Naive thymus-derived CD4-positive, alpha-beta T cell (primary cell): ENCODE measurements at regions of chr1 and their contacts with region 1.

Region 1: DNA sequence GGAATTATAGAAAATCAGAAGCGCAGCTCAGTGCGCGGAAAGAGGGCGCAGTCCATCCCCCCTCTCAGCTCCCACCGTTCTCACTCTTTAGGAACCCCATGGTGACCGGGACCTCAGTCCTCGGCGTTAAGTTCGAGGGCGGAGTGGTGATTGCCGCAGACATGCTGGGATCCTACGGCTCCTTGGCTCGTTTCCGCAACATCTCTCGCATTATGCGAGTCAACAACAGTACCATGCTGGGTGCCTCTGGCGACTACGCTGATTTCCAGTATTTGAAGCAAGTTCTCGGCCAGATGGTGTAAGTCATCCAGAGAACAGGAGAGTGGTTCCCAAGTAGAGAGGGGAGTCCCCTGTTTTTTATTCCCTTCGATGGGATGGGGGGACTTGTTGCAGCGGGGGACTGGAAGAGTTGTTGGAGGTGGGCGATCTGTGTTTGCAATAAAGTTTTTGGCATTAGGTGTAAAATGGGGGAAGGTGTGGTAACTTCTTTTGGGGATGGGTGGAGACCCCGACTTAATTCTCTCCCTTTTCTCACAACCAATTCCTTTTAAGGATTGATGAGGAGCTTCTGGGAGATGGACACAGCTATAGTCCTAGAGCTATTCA is 620 bp downstream of the PSMB4 start:
- DNase-seq: peak in 3 of 9 donors; percentile 2 to 10 (median 10)
- ATAC-seq: peak; percentile 15
- H3K4me3 ChIP-seq: peak overlapping the region; percentile 95
- H3K4me3 Mint-ChIP-seq: peak overlapping the region; percentile 84 to 99 (median 94)
- H3K27ac ChIP-seq: peak overlapping the region; percentile 98
- H3K27ac Mint-ChIP-seq: peak overlapping the region; percentile 94 to 99 (median 98)
- H3K4me1 ChIP-seq: peaks cover 13 to 14% of the 10 kb centered on the region in 2 donors
- H3K4me1 Mint-ChIP-seq: peaks cover 11 to 34% (median 28%) of the 10 kb centered on the region in 7 donors
- H3K27me3 ChIP-seq: no peaks in the 10 kb centered on the region
- H3K27me3 Mint-ChIP-seq: peaks cover 0 to 12% (median 0%) of the 10 kb centered on the region in 5 donors

Region 2: GRCh38 chr1:150650199-150650598 is 749.8 kb before region 1 on chr1:
- CTCF ChIA-PET with region 1: no interaction called
- POLR2A ChIA-PET with region 1: no interaction called
- intact Hi-C with region 1: no loop called
- DNase-seq: no peak
- ATAC-seq: no peak
- H3K4me3 ChIP-seq: no peak overlapping the region
- H3K4me3 Mint-ChIP-seq: no peak overlapping the region
- H3K27ac ChIP-seq: no peak overlapping the region
- H3K27ac Mint-ChIP-seq: no peak overlapping the region
- H3K4me1 ChIP-seq: no peaks in the 10 kb centered on the region
- H3K4me1 Mint-ChIP-seq: peaks cover 0 to 10% (median 2%) of the 10 kb centered on the region in 7 donors
- H3K27me3 ChIP-seq: no peaks in the 10 kb centered on the region
- H3K27me3 Mint-ChIP-seq: no peaks in the 10 kb centered on the region

Region 3: DNA sequence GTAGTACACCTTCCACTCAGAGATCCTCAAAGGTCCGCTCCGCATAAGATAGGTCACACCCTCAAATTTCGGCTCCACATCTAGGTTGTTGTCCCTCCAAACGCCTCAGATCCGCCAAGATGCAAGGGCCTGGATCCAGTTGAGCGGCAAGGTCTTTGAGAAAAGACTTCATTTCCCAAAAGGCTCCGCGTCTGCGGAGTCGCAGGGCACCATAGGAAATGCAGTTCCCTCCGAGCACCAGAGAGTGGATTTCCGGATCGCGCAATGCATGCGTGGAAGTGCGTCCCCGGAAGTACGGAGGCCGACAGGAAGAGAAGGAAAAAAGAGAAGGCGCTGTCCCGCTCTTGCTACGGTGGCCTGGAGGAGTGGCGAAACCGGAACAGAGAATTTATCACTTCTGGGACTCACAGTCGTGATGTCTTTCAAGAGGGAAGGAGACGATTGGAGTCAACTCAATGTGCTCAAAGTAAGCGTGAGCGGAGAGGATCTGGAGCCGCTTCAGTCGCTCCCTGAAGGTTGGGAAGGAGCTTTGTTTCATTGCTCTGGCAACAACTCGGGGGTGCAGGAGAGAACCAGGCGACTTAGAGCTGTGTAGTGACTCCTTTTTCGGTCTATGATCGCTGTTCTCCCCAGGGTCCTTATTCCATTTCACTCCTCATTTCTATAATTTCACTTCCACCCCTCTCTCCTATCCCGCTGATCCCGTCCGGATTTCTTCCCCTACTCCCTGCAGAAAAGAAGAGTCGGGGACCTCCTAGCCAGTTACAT is 234.1 kb before region 1 on chr1 and contains the starts of genes LYSMD1 and SCNM1:
- CTCF ChIA-PET with region 1: no interaction called
- POLR2A ChIA-PET with region 1: interaction called, 3 read pairs
- intact Hi-C with region 1: loop called in 1 of 2 experiments (anchors 1 kb)
- DNase-seq: peak; percentile 78 to 98 (median 97)
- ATAC-seq: peak; percentile 98
- H3K4me3 ChIP-seq: peak within 1 kb of the TSS; percentile 97
- H3K4me3 Mint-ChIP-seq: peak within 1 kb of the TSS; percentile 87 to 99 (median 95)
- H3K27ac ChIP-seq: peak within 1 kb of the TSS; percentile 71
- H3K27ac Mint-ChIP-seq: peak within 1 kb of the TSS; percentile 90 to 99 (median 97)
- H3K4me1 ChIP-seq: peaks cover 18 to 19% of the 10 kb centered on the region in 2 donors
- H3K4me1 Mint-ChIP-seq: peaks cover 30 to 70% (median 52%) of the 10 kb centered on the region in 7 donors
- H3K27me3 ChIP-seq: no peaks in the 10 kb centered on the region
- H3K27me3 Mint-ChIP-seq: peaks cover 0 to 3% (median 0%) of the 10 kb centered on the region in 5 donors
- total RNA-seq, gene LYSMD1: 1.4 to 3.3 (median 2.3) TPM
- total RNA-seq, gene SCNM1: 37.1 to 73.1 (median 57.1) TPM

Region 4: GRCh38 chr1:151198255-151199127 is 201.5 kb before region 1 on chr1 and contains the start of gene PIP5K1A:
- CTCF ChIA-PET with region 1: no interaction called
- POLR2A ChIA-PET with region 1: no interaction called
- intact Hi-C with region 1: loop called (anchors 1 to 2 kb)
- DNase-seq: peak; percentile 96 to 99 (median 97)
- ATAC-seq: peak; percentile 98
- H3K4me3 ChIP-seq: peak within 1 kb of the TSS; percentile 83
- H3K4me3 Mint-ChIP-seq: peak within 1 kb of the TSS; percentile 93 to 100 (median 98)
- H3K27ac ChIP-seq: peak within 1 kb of the TSS; percentile 88
- H3K27ac Mint-ChIP-seq: peak within 1 kb of the TSS; percentile 95 to 99 (median 98)
- H3K4me1 ChIP-seq: peaks cover 11% of the 10 kb centered on the region in 2 donors
- H3K4me1 Mint-ChIP-seq: peaks cover 31 to 56% (median 46%) of the 10 kb centered on the region in 7 donors
- H3K27me3 ChIP-seq: no peaks in the 10 kb centered on the region
- H3K27me3 Mint-ChIP-seq: peaks cover 0 to 12% (median 0%) of the 10 kb centered on the region in 5 donors
- total RNA-seq, gene PIP5K1A: 56.9 to 76.5 (median 59.5) TPM

Region 5: GRCh38 chr1:151311589-151312331 is 88.2 kb before region 1 on chr1:
- CTCF ChIA-PET with region 1: no interaction called
- POLR2A ChIA-PET with region 1: no interaction called
- intact Hi-C with region 1: no loop called
- DNase-seq: peak in 1 of 9 donors; percentile 65
- ATAC-seq: peak; percentile 94
- H3K4me3 ChIP-seq: no peak overlapping the region
- H3K4me3 Mint-ChIP-seq: peak overlapping the region in 2 of 10 donors; percentile 7 to 12
- H3K27ac ChIP-seq: peak overlapping the region; percentile 4
- H3K27ac Mint-ChIP-seq: peak overlapping the region; percentile 21 to 88 (median 63)
- H3K4me1 ChIP-seq: peaks cover 4 to 10% of the 10 kb centered on the region in 2 donors
- H3K4me1 Mint-ChIP-seq: peaks cover 30 to 58% (median 48%) of the 10 kb centered on the region in 7 donors
- H3K27me3 ChIP-seq: no peaks in the 10 kb centered on the region
- H3K27me3 Mint-ChIP-seq: no peaks in the 10 kb centered on the region

Region 6: DNA sequence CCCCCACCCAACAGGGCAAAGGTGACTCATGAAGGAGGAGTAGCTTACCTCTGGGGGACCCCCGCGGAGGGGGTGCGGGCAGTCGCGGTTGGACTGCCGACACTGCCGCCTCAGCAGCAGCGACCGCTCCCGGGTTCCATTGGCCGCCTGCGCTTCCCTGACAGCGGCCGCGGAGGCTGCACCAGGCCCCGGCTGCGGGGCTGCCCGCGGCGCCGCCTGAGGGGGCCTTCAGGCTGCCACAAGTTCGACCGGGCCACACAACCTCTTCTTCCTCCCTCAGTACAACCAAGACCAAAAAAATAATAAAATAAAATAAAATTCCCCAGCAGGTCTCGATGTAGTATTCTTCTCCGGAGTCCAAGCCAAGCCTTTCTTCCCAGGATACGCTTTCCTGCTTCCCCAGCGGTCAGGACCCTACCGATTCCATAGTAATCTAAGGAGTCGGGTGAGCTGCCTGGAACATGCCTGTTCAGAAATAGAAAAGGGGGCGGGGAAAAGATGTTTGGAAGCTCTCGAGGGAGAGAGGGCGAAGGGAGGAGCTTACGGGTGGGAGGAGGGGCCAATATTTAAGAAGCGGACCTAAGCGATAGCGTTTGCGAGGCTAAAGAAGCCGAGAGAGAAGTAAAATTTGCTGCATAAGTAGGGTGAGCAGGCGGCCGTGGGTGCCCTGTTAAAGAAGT is 72.6 kb before region 1 on chr1 and contains the start of gene PI4KB:
- CTCF ChIA-PET with region 1: no interaction called
- POLR2A ChIA-PET with region 1: interaction called, 11 read pairs
- intact Hi-C with region 1: loop called (anchors 1 kb)
- DNase-seq: peak; percentile 72 to 96 (median 93)
- ATAC-seq: peak; percentile 96
- H3K4me3 ChIP-seq: peak within 1 kb of the TSS; percentile 72
- H3K4me3 Mint-ChIP-seq: peak within 1 kb of the TSS; percentile 91 to 100 (median 96)
- H3K27ac ChIP-seq: peak within 1 kb of the TSS; percentile 96
- H3K27ac Mint-ChIP-seq: peak within 1 kb of the TSS; percentile 90 to 100 (median 97)
- H3K4me1 ChIP-seq: peaks cover 6 to 18% of the 10 kb centered on the region in 2 donors
- H3K4me1 Mint-ChIP-seq: peaks cover 14 to 53% (median 44%) of the 10 kb centered on the region in 7 donors
- H3K27me3 ChIP-seq: no peaks in the 10 kb centered on the region
- H3K27me3 Mint-ChIP-seq: peaks cover 0 to 2% (median 0%) of the 10 kb centered on the region in 5 donors
- total RNA-seq, gene PI4KB: 64.0 to 91.9 (median 76.3) TPM

Region 7: DNA sequence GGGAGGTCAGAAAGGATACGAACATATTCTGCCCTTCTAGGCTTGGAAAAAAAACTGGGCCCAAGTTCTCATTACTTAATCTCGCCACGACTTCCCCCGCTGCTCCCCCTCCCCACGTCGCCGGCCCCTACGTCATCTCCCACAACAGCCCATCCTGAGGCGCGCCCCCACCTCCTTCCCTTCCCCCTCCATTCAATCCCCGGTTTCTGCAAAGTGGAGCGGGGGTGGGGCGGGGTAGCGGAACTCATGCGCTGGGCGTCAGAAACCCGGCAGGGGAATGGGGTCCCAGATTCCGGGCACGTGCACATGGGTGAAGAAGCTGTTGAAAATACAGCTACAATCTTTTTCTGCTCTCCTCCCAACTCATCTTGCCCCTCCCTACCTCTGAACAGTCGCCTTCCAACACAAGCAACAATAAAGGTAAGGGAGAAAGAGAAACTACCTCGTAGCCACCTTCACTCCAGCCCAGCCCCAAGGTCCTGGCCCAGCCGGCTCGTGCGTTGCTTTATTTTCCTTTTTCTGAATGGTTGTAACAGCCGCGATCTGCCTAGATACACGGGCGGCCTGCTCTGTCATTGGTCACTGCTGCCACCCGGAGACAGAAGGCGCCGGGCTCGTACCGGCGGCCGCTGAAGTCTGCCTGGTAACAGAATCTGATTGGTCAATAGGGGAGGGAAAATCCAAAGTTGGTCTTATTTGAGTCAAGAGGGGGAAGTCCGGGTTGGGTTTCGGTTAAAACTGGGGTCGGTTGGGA is 53.0 kb before region 1 on chr1 and contains the start of gene RFX5:
- CTCF ChIA-PET with region 1: no interaction called
- POLR2A ChIA-PET with region 1: interaction called, 3 read pairs
- intact Hi-C with region 1: loop called (anchors 1 kb)
- DNase-seq: peak; percentile 73 to 98 (median 94)
- ATAC-seq: peak; percentile 95
- H3K4me3 ChIP-seq: peak within 1 kb of the TSS; percentile 75
- H3K4me3 Mint-ChIP-seq: peak within 1 kb of the TSS; percentile 85 to 98 (median 95)
- H3K27ac ChIP-seq: peak within 1 kb of the TSS; percentile 96
- H3K27ac Mint-ChIP-seq: peak within 1 kb of the TSS; percentile 95 to 100 (median 99)
- H3K4me1 ChIP-seq: peaks cover 13 to 16% of the 10 kb centered on the region in 2 donors
- H3K4me1 Mint-ChIP-seq: peaks cover 20 to 44% (median 39%) of the 10 kb centered on the region in 7 donors
- H3K27me3 ChIP-seq: no peaks in the 10 kb centered on the region
- H3K27me3 Mint-ChIP-seq: no peaks in the 10 kb centered on the region
- total RNA-seq, gene RFX5: 62.6 to 89.3 (median 82.2) TPM

Region 8: GRCh38 chr1:151459331-151460046 is 59.5 kb after region 1 on chr1 and contains the start of gene POGZ:
- CTCF ChIA-PET with region 1: no interaction called
- POLR2A ChIA-PET with region 1: interaction called, 3 read pairs
- intact Hi-C with region 1: loop called (anchors 1 kb)
- DNase-seq: peak; percentile 80 to 94 (median 93)
- ATAC-seq: peak; percentile 87
- H3K4me3 ChIP-seq: peak within 1 kb of the TSS; percentile 73
- H3K4me3 Mint-ChIP-seq: peak within 1 kb of the TSS; percentile 87 to 100 (median 91)
- H3K27ac ChIP-seq: peak within 1 kb of the TSS; percentile 81
- H3K27ac Mint-ChIP-seq: peak within 1 kb of the TSS; percentile 91 to 97 (median 96)
- H3K4me1 ChIP-seq: peaks cover 8 to 12% of the 10 kb centered on the region in 2 donors
- H3K4me1 Mint-ChIP-seq: peaks cover 15 to 43% (median 34%) of the 10 kb centered on the region in 7 donors
- H3K27me3 ChIP-seq: no peaks in the 10 kb centered on the region
- H3K27me3 Mint-ChIP-seq: peaks cover 15 to 25% (median 18%) of the 10 kb centered on the region in 5 donors
- total RNA-seq, gene POGZ: 83.7 to 143 (median 112) TPM

Region 9: DNA sequence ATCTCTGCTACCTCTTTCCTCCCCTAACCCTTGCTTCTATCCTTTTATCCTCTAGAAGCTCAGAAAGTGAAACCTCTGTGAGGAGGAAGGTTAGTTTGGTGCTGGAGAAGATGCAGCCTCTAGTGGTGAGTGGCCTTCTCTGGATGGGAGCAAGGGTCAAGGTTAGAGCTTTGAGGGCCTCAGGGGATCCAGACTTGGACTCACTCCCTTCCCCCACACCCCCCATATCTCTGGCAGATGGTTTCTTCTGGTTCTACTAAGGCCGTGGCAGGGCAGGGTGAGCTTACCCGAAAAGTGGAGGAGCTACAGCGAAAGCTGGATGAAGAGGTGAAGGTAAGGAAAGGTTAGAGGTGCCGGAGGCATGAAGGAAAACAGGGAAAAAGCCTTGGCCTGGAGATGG is 120.4 kb after region 1 on chr1:
- CTCF ChIA-PET with region 1: no interaction called
- POLR2A ChIA-PET with region 1: no interaction called
- intact Hi-C with region 1: no loop called
- DNase-seq: no peak
- ATAC-seq: no peak
- H3K4me3 ChIP-seq: no peak overlapping the region
- H3K4me3 Mint-ChIP-seq: no peak overlapping the region
- H3K27ac ChIP-seq: no peak overlapping the region
- H3K27ac Mint-ChIP-seq: no peak overlapping the region
- H3K4me1 ChIP-seq: no peaks in the 10 kb centered on the region
- H3K4me1 Mint-ChIP-seq: peaks cover 0 to 4% (median 0%) of the 10 kb centered on the region in 7 donors
- H3K27me3 ChIP-seq: no peaks in the 10 kb centered on the region
- H3K27me3 Mint-ChIP-seq: peaks cover 0 to 7% (median 0%) of the 10 kb centered on the region in 5 donors